ENCODE measurements at regions of chr12 and their contacts with region 1.

Region 1: GRCh38 chr12:56688129-56688845 is at the start of gene PTGES3:
- DNase-seq: peak; percentile 98
- H3K4me3 ChIP-seq: peak within 1 kb of the TSS; percentile 64 to 94 (median 78)
- H3K27ac ChIP-seq: peak within 1 kb of the TSS; percentile 89
- H3K4me1 ChIP-seq: peaks cover 4% of the 10 kb centered on the region
- H3K27me3 ChIP-seq: no peaks in the 10 kb centered on the region
- CTCF ChIP-seq: peak in 1 of 2 donors; percentile 4
- total RNA-seq, gene PTGES3: 63.5 to 197 TPM

Region 2: GRCh38 chr12:56490360-56490759 is 197.9 kb before region 1 on chr12:
- CTCF ChIA-PET with region 1: no interaction called
- dilution Hi-C with region 1: no loop called
- in situ Hi-C with region 1: no loop called
- intact Hi-C with region 1: loop called (anchors 5 kb)
- DNase-seq: no peak
- H3K4me3 ChIP-seq: no peak overlapping the region
- H3K27ac ChIP-seq: no peak overlapping the region
- H3K4me1 ChIP-seq: peaks cover 16% of the 10 kb centered on the region
- H3K27me3 ChIP-seq: no peaks in the 10 kb centered on the region
- CTCF ChIP-seq: no peak

Region 3: GRCh38 chr12:56645717-56646446 is 42.4 kb before region 1 on chr12 and contains the start of gene ATP5F1B:
- CTCF ChIA-PET with region 1: no interaction called
- dilution Hi-C with region 1: no loop called
- in situ Hi-C with region 1: no loop called
- intact Hi-C with region 1: loop called (anchors 2 kb)
- DNase-seq: peak; percentile 100
- H3K4me3 ChIP-seq: peak within 1 kb of the TSS; percentile 67 to 97 (median 67)
- H3K27ac ChIP-seq: peak within 1 kb of the TSS; percentile 90
- H3K4me1 ChIP-seq: peaks cover 20% of the 10 kb centered on the region
- H3K27me3 ChIP-seq: no peaks in the 10 kb centered on the region
- CTCF ChIP-seq: no peak
- total RNA-seq, gene ATP5F1B: 374 to 617 TPM

Region 4: DNA sequence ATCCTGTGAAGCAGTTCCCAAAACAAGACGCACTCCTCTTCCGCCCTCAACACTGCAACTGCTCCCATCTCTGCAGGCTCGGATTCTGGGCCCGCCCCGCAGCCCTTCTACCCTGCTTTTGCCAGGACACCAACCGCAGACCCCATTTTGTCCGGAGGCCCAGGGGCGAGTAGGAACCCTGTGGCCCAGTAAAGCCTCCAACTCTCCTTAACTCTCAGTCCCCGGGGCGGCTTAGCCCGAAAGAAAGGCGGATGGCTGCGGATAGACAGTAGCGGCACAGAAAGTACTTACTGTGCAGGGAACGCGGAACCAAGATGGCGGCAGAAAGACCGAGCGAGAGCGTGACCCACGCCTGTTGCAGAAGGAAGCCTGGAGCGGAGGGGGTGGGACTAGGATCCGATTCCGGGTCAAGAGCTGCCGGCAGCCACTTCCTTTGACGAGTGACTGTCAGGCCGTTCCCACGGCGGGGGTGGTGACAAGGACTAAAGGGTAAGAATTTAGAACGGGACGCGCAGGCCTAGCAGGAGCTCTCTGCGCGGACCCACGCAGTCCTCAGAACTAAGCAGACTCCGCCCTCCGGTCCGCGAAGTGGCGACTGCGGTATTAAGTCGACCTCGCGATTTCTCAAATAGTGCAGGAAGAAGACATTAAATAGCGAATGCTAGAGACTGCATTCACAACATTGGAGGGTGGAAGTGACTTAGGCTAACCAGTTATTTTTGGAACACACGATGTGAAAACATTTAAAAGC is 36.9 kb after region 1 on chr12 and contains the start of gene NACA:
- CTCF ChIA-PET with region 1: interaction called, 3 read pairs
- dilution Hi-C with region 1: no loop called
- in situ Hi-C with region 1: no loop called
- intact Hi-C with region 1: loop called (anchors 1 kb)
- DNase-seq: peak; percentile 96
- H3K4me3 ChIP-seq: peak within 1 kb of the TSS; percentile 74 to 99 (median 96)
- H3K27ac ChIP-seq: peak within 1 kb of the TSS; percentile 94
- H3K4me1 ChIP-seq: peaks cover 28% of the 10 kb centered on the region
- H3K27me3 ChIP-seq: no peaks in the 10 kb centered on the region
- CTCF ChIP-seq: no peak
- total RNA-seq, gene NACA: 727 to 735 TPM

Region 5: DNA sequence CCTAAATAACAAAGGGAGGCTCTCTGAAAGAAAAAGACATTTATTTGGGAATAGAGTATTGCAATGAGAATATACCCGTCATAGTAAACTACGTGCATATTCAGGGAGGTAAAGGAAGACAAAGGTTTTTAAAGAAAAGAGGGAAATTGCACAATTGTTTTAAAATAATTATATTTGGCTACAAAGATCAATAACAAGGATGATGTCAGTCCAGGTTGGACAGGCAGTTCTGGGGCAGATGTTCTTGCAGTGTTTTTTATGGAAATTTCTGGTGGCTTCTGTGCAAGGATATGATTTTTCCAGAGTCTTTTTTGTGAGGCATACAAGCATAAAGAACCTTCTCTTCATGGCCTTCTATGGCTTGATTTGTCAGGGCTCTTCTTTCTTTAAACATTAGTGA is 104.4 kb after region 1 on chr12:
- CTCF ChIA-PET with region 1: no interaction called
- dilution Hi-C with region 1: no loop called
- in situ Hi-C with region 1: no loop called
- intact Hi-C with region 1: no loop called
- DNase-seq: no peak
- H3K4me3 ChIP-seq: no peak overlapping the region
- H3K27ac ChIP-seq: no peak overlapping the region
- H3K4me1 ChIP-seq: no peaks in the 10 kb centered on the region
- H3K27me3 ChIP-seq: no peaks in the 10 kb centered on the region
- CTCF ChIP-seq: no peak